ENCODE measurements at regions of chr3 and their contacts with region 1.

Region 1: GRCh38 chr3:122258757-122259371 is 66.2 kb upstream of the CSTA start:
- DNase-seq: peak; percentile 87
- H3K4me3 ChIP-seq: no peak overlapping the region
- H3K27ac ChIP-seq: no peak overlapping the region
- H3K4me1 ChIP-seq: no peaks in the 10 kb centered on the region
- H3K27me3 ChIP-seq: peaks cover 9% of the 10 kb centered on the region

Region 2: DNA sequence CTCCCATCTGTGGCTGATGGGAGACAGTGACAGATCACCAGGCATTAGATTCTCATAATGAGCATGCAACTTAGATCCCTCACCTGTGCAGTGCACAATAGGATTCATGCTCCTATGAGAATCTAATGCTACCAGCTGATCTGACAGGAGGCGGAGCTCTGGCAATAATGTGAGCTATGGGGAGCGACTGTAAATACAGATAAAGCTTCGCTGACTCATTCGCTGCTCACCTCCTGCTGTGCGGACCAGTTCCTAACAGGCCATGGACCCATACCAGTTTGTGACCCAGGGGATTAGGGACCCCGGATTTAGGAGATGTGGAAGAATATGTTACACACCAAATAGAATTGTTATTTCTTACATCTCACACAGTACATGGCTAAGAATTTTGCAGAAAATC is 684.4 kb before region 1 on chr3:
- in situ Hi-C with region 1: loop called (anchors 25 kb)
- DNase-seq: no peak
- H3K4me3 ChIP-seq: no peak overlapping the region
- H3K27ac ChIP-seq: no peak overlapping the region
- H3K4me1 ChIP-seq: no peaks in the 10 kb centered on the region
- H3K27me3 ChIP-seq: no peaks in the 10 kb centered on the region; the same call in 1 of the 2 replicates

Region 3: DNA sequence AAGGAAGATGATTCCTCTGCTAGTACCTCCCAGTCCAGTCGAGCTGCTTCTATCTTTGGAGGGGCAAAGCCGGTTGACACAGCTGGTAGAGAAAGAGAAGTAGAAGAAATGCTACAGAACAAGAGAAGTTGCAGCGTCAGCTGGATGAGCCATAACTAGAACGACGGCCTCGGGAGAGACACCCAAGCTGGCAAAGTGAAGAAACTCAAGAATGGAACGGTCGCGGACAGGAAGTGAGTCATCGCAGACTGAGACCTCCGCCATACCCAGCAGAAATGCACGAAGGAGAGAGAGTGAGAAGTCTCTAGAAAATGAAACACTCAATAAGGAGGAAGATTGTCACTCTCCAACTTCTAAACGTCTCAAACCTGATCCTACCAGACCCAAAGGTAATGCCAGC is 402.8 kb after region 1 on chr3:
- in situ Hi-C with region 1: no loop called
- DNase-seq: no peak
- H3K4me3 ChIP-seq: no peak overlapping the region
- H3K27ac ChIP-seq: no peak overlapping the region
- H3K4me1 ChIP-seq: no peaks in the 10 kb centered on the region
- H3K27me3 ChIP-seq: no peaks in the 10 kb centered on the region; the same call in 1 of the 2 replicates

Region 4: DNA sequence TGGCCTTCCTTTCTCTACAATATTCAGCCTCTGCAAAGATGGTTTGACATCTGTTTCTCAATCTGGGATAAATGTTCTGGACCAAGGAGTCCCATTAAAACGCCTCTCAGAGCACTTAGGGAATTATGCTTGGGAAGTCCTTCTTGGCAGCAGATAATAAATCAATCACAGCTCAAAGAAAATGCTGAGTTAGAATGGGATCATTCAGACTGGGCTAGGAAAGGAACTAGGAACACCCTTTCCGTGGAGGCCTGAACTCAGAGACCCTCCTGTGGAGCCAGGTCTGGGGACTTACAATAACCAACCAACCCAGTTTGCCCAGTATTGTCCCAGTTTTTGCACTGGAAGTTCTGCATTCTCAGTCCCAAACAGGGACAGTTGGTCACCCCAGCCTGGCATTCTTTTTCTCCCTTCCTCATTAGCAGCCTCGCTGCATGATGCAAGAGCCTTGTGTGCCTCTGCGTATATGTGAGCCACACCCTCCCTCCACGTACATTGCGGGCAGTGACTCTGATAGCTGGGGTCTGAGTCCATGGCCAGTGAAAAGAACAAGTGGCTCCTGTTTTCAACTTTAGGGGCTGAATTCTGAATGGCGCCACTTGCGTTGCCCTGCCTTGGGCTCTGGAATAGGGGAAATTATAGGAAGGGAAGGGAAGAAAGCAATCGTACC is 680.0 kb after region 1 on chr3:
- in situ Hi-C with region 1: no loop called
- DNase-seq: no peak
- H3K4me3 ChIP-seq: no peak overlapping the region
- H3K27ac ChIP-seq: no peak overlapping the region
- H3K4me1 ChIP-seq: no peaks in the 10 kb centered on the region
- H3K27me3 ChIP-seq: peaks cover 25% of the 10 kb centered on the region